Common myeloid progenitor, CD34-positive (primary cell): ENCODE measurements at regions of chr1 and their contacts with region 1.

Region 1: DNA sequence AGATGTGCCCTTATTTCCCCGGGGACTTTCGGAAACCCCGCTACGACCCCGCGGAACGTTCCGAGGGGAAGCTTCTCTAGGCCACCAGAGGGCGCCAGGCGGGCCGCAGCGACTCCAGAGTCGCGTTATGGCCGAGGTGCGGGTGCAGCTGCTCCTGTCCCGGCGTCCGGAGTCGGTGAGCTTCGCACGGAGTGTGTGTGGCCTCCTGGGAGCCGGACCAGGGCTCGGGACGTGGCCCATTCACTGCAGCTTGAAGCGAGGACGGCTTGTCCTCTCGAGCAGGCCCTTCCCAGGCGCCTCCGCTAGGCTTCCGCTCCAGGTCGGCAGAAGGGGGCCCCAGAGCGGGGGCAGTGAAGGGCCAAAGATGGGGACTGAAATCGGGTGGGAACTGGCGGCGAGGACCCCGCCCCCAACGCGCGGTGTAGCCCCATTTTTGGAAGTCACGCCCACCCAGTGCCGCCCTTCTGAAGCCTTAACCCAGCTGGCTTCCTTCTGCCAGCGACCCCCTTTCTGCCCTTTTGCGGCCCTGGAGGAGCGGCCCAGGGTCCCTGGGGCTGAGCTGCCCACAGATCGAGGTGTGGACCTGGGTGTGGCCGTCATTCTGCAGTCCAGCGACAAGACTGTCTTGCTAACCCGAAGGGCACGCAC is at the start of gene NUDT17:
- DNase-seq: peak; percentile 76 to 83 (median 79)
- H3K4me3 ChIP-seq: peak within 1 kb of the TSS; percentile 75 to 90 (median 81)
- H3K27ac ChIP-seq: peak within 1 kb of the TSS; percentile 27 to 74
- H3K4me1 ChIP-seq: peaks cover 0 to 24% (median 17%) of the 10 kb centered on the region in 4 experiments
- H3K27me3 ChIP-seq: no peaks in the 10 kb centered on the region

Region 2: DNA sequence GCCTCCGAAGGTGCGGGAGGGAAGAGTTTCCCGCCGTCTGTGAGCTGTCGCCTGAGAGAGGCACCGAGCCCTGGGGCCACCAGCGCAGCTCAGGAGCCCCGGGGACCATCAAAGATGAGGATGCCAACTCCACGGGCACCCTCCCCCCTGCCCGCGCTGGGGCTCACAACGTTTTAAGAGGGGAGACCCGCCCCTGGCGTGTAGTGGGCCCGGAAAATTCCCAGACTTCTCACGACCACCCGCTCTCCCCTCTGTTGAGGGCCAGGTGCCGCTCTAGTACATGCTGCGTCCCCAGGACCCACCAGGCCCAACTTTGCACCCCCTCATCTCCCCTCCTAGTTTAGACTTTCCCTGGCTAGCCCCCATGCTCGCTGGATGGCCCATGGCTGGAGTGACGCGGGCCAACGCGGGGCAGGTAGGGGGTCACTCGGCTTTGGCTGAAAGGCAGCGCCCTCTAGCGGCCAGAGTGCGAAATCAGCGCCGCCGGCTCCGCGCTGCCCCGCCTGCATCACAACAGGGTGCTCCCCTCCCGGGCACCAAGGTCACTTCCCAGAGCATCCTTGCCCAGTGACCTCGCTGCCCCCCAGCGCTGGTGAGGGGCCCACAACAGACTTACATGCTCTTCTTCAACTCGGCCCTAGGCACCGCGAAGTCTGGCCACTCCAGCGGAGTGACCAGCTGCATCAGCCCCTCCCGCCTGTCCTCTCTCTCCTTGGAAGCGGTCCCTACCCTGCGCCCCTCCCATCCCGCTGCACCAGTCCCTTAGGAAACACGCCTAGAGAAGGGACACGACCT is 124.6 kb before region 1 on chr1:
- CTCF ChIA-PET with region 1: no interaction called
- POLR2A ChIA-PET with region 1: no interaction called
- DNase-seq: peak; percentile 39 to 65 (median 63)
- H3K4me3 ChIP-seq: peak overlapping the region; percentile 5 to 75 (median 53)
- H3K27ac ChIP-seq: no peak overlapping the region
- H3K4me1 ChIP-seq: peaks cover 0 to 9% (median 9%) of the 10 kb centered on the region in 4 experiments
- H3K27me3 ChIP-seq: peaks cover 0 to 24% (median 7%) of the 10 kb centered on the region in 5 experiments

Region 3: GRCh38 chr1:145804235-145805045 is 41.2 kb before region 1 on chr1:
- CTCF ChIA-PET with region 1: interaction called, 10 read pairs
- POLR2A ChIA-PET with region 1: no interaction called
- DNase-seq: peak in 2 of 3 donors; percentile 28 to 34
- H3K4me3 ChIP-seq: no peak overlapping the region
- H3K27ac ChIP-seq: no peak overlapping the region
- H3K4me1 ChIP-seq: peaks cover 2 to 15% (median 9%) of the 10 kb centered on the region in 4 experiments
- H3K27me3 ChIP-seq: no peaks in the 10 kb centered on the region

Region 4: GRCh38 chr1:145858894-145859490 is 13.4 kb after region 1 on chr1 and contains the start of gene PIAS3:
- CTCF ChIA-PET with region 1: interaction called, 157 read pairs
- POLR2A ChIA-PET with region 1: interaction called, 12 read pairs
- DNase-seq: peak; percentile 91 to 97 (median 94)
- H3K4me3 ChIP-seq: peak within 1 kb of the TSS; percentile 88 to 97 (median 92)
- H3K27ac ChIP-seq: peak within 1 kb of the TSS; percentile 17 to 82
- H3K4me1 ChIP-seq: peaks cover 0 to 17% (median 15%) of the 10 kb centered on the region in 4 experiments
- H3K27me3 ChIP-seq: no peaks in the 10 kb centered on the region

Region 5: GRCh38 chr1:145891587-145892485 is 46.2 kb after region 1 on chr1:
- CTCF ChIA-PET with region 1: interaction called, 41 read pairs
- POLR2A ChIA-PET with region 1: no interaction called
- DNase-seq: peak; percentile 78 to 80 (median 80)
- H3K4me3 ChIP-seq: peak overlapping the region in 1 of 7 experiments; percentile 3
- H3K27ac ChIP-seq: peak overlapping the region in 1 of 2 experiments; percentile 10
- H3K4me1 ChIP-seq: peaks cover 0 to 15% (median 9%) of the 10 kb centered on the region in 4 experiments
- H3K27me3 ChIP-seq: no peaks in the 10 kb centered on the region

Region 6: GRCh38 chr1:145918144-145918992 is 72.7 kb after region 1 on chr1 and contains the start of gene PEX11B:
- CTCF ChIA-PET with region 1: interaction called, 17 read pairs
- POLR2A ChIA-PET with region 1: interaction called, 5 read pairs
- DNase-seq: peak; percentile 99 to 100 (median 100)
- H3K4me3 ChIP-seq: peak within 1 kb of the TSS; percentile 75 to 99 (median 94)
- H3K27ac ChIP-seq: peak within 1 kb of the TSS; percentile 75 to 83
- H3K4me1 ChIP-seq: peaks cover 2 to 28% (median 23%) of the 10 kb centered on the region in 4 experiments
- H3K27me3 ChIP-seq: no peaks in the 10 kb centered on the region

Region 7: DNA sequence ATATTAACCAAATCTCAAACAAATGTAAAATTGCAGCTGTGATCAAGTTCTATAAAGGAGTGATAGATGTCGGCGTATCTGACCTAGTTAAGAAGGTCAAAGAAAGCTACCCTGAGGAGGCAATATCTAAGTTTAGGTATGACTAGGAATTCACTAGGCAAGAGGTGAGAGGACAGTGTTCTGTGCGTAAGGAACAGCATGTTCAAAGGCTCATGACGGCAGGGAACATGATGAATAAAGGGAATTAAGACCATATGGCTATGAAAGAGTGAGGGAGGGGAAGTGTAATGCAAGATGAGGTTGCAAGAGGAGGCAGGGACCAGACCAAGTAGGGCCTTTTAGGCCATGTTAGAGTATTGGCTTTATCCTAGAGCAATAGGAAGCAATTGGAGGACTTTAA is 103.6 kb after region 1 on chr1:
- CTCF ChIA-PET with region 1: no interaction called
- POLR2A ChIA-PET with region 1: no interaction called
- DNase-seq: no peak
- H3K4me3 ChIP-seq: no peak overlapping the region
- H3K27ac ChIP-seq: no peak overlapping the region
- H3K4me1 ChIP-seq: peaks cover 0 to 11% (median 3%) of the 10 kb centered on the region in 4 experiments
- H3K27me3 ChIP-seq: no peaks in the 10 kb centered on the region

Region 8: GRCh38 chr1:146007506-146008133 is 162.0 kb after region 1 on chr1:
- CTCF ChIA-PET with region 1: interaction called, 85 read pairs
- POLR2A ChIA-PET with region 1: interaction called, 3 read pairs
- DNase-seq: no peak
- H3K4me3 ChIP-seq: no peak overlapping the region
- H3K27ac ChIP-seq: peak overlapping the region in 1 of 2 experiments; percentile 82
- H3K4me1 ChIP-seq: peaks cover 0 to 13% (median 10%) of the 10 kb centered on the region in 4 experiments
- H3K27me3 ChIP-seq: no peaks in the 10 kb centered on the region

Region 9: DNA sequence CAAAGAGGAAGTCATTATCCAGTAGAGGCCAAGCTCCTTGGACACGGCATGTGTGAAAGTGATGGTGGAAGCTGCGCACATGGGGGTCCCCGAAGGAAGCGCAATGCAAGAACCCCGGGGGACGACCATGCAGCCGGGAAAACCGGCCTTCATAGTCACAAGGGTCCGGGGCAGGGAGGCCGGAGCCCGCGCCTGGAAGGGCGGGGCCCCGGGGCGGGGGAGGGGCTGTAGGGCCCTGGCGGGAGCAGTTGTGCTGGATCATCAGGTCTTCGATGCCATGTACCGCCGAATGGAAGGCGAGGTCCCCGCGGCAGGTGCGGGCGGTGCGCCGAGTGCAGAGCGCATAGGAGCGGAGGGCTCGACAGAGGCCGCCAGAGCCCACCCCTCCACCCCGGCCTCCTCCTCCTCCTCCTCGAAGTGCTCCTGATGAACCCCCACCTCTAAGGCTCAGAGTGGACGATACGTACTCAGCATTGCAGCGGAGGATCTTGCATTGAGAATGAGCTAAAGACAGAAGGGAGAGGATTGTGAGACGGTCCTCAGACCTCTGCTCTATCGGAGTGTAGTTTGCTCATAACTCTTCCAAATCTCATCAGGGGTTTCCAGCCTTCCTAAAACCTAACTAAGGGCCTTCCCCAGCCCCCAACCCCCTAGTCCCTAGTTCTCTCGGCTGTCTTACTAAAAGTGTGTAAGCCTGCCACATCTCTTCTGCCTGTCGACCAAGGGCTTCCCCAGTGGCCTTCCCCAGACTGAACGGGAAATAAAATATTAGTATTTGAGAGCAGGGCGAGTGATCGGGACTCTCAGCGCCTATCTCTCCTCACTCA is 173.8 kb after region 1 on chr1:
- CTCF ChIA-PET with region 1: interaction called, 85 read pairs
- POLR2A ChIA-PET with region 1: interaction called, 3 read pairs
- DNase-seq: no peak
- H3K4me3 ChIP-seq: peak overlapping the region in 5 of 7 experiments; percentile 8 to 32 (median 23)
- H3K27ac ChIP-seq: no peak overlapping the region
- H3K4me1 ChIP-seq: peaks cover 0 to 12% (median 10%) of the 10 kb centered on the region in 4 experiments
- H3K27me3 ChIP-seq: peaks cover 4 to 42% (median 26%) of the 10 kb centered on the region in 5 experiments